Mammary epithelial cell (primary cell): ENCODE measurements at regions of chr2 and their contacts with region 1.

Region 1: GRCh38 chr2:64831134-64831976 is 157.8 kb upstream of the SLC1A4 start:
- DNase-seq: peak; percentile 98
- H3K4me3 ChIP-seq: no peak overlapping the region
- H3K27ac ChIP-seq: peak overlapping the region; percentile 59
- H3K4me1 ChIP-seq: peaks cover 25% of the 10 kb centered on the region
- H3K27me3 ChIP-seq: no peaks in the 10 kb centered on the region
- CTCF ChIP-seq: peak; percentile 78 to 97

Region 2: GRCh38 chr2:64767670-64768468 is 63.5 kb before region 1 on chr2:
- CTCF ChIA-PET with region 1: interaction called, 3 read pairs
- dilution Hi-C with region 1: no loop called
- in situ Hi-C with region 1: loop called in 1 of 2 experiments (anchors 5 kb)
- intact Hi-C with region 1: loop called (anchors 1 kb)
- DNase-seq: peak; percentile 86
- H3K4me3 ChIP-seq: peak overlapping the region; percentile 57 to 75 (median 67)
- H3K27ac ChIP-seq: peak overlapping the region; percentile 86
- H3K4me1 ChIP-seq: peaks cover 28% of the 10 kb centered on the region
- H3K27me3 ChIP-seq: no peaks in the 10 kb centered on the region
- CTCF ChIP-seq: peak in 1 of 2 donors; percentile 0

Region 3: DNA sequence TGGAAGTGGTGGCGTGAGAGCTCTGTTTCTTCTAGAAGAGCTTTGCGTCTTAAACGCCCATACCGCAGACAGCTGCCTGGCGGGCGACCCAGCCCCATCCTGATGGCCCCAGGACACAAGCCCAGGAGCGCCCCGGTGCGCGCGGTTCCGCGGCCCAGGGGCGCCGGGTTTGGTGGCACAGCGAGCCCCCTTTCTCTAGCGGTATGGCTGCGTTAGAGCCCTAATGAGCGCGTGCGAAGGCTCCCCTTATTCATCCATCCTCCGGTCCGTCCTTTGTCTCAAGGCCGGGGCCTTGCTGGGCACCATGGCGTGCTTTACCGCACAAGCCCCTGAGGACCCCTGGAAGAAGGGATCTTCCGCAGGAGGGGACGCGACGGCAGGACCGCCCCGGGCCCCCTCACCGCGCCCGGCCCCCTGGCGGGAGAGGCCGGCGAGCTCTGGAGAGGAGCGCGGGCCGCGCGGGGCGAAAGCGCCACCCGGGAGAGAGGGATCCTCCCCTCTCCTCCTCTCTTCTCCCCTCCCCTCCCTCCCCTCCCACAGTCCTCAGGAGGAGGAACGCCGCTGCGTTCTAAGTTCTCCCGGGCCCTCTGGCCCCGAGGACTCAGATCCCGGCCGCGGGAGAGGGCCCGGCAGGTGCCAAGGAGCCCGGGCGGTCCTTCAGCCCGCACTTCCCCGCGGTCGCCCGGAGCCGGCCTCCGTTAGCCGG is 157.2 kb after region 1 on chr2:
- CTCF ChIA-PET with region 1: no interaction called
- dilution Hi-C with region 1: no loop called
- in situ Hi-C with region 1: no loop called
- intact Hi-C with region 1: loop called (anchors 5 kb)
- DNase-seq: peak; percentile 83
- H3K4me3 ChIP-seq: peak overlapping the region; percentile 59 to 69 (median 63)
- H3K27ac ChIP-seq: peak overlapping the region; percentile 40
- H3K4me1 ChIP-seq: peaks cover 19% of the 10 kb centered on the region
- H3K27me3 ChIP-seq: no peaks in the 10 kb centered on the region
- CTCF ChIP-seq: peak; percentile 4 to 47

Region 4: DNA sequence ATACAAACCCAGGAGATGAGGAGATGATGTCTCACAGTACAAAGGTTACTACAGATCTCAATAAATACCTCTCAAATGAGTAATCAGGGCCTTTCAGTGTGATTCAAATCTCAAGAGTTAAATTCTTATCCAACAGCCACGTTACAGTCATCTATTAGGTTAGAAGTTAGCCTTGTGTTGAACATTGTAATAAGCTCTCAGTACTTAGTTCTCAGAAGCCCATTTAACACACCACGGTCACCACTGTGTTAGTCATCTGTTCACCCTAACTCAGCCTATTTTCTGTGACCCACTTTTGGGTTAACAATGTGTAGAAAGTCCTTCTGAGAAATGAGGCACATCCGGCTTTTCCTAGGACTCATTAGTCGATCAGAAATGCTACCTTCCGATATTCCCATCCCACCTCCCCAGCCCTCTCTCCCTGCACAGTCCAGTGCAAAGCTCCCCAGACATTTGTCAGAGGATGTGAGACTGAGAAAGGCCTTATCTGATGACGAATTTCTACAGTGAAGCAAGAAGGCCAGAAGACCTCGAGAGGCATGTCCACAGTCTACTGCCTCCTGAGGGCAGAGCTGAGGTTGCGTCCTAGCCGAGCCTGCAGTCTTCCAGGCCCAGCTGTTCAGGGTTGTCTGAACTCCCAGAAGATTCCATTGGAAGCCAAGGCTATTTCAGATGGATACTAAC is 488.8 kb after region 1 on chr2:
- CTCF ChIA-PET with region 1: no interaction called
- dilution Hi-C with region 1: no loop called
- in situ Hi-C with region 1: no loop called
- intact Hi-C with region 1: no loop called
- DNase-seq: peak; percentile 94
- H3K4me3 ChIP-seq: no peak overlapping the region
- H3K27ac ChIP-seq: peak overlapping the region; percentile 77
- H3K4me1 ChIP-seq: peaks cover 58% of the 10 kb centered on the region
- H3K27me3 ChIP-seq: no peaks in the 10 kb centered on the region
- CTCF ChIP-seq: peak; percentile 45 to 54